Panc1 (cell line): ENCODE measurements at regions of chr3 and their contacts with region 1.

Region 1: GRCh38 chr3:1824359-1824758 is 274.3 kb upstream of the CNTN4 start:
- DNase-seq: no peak
- ATAC-seq: no peak
- H3K4me3 ChIP-seq: no peak overlapping the region
- H3K27ac ChIP-seq: no peak overlapping the region
- H3K4me1 ChIP-seq: no peaks in the 10 kb centered on the region
- H3K27me3 ChIP-seq: no peaks in the 10 kb centered on the region
- CTCF ChIP-seq: no peak

Region 2: GRCh38 chr3:882533-882932 is 941.8 kb before region 1 on chr3:
- CTCF ChIA-PET with region 1: interaction called, 10 read pairs
- POLR2A ChIA-PET with region 1: no interaction called
- in situ Hi-C with region 1: no loop called
- intact Hi-C with region 1: no loop called
- DNase-seq: no peak
- ATAC-seq: no peak
- H3K4me3 ChIP-seq: no peak overlapping the region
- H3K27ac ChIP-seq: no peak overlapping the region
- H3K4me1 ChIP-seq: no peaks in the 10 kb centered on the region
- H3K27me3 ChIP-seq: no peaks in the 10 kb centered on the region
- CTCF ChIP-seq: no peak

Region 3: GRCh38 chr3:1726741-1727140 is 97.6 kb before region 1 on chr3:
- CTCF ChIA-PET with region 1: no interaction called
- POLR2A ChIA-PET with region 1: no interaction called
- in situ Hi-C with region 1: no loop called
- intact Hi-C with region 1: no loop called
- DNase-seq: no peak
- ATAC-seq: no peak
- H3K4me3 ChIP-seq: no peak overlapping the region
- H3K27ac ChIP-seq: no peak overlapping the region
- H3K4me1 ChIP-seq: no peaks in the 10 kb centered on the region
- H3K27me3 ChIP-seq: no peaks in the 10 kb centered on the region
- CTCF ChIP-seq: no peak

Region 4: DNA sequence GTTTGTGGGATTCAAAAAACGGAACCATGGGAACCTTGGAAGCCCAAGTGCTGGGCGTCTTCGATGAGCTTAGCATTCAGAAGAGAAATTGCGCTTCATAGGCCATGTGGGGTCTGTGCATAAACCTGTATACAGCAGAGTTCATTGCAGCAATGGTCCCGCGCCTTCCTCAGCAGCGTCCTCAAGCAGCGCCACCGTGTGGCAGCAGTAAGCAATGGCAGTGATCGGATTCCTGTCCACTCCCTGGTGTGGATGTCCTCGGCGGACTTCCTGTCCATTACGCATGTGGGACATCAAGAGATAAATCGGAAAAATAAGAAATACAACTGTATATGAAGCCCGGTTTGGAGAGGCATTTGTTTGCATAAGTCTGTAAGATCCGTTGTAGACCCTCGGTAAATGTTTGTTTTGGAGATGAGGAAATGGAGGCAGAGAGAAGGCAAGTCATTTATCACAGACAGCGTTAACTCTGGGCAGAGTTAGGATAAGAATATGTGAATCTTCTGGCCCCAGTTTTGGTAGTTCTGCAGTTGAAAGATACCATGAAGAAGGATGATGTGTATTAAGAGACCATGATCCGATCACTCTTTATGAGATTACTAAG is 332.0 kb after region 1 on chr3:
- CTCF ChIA-PET with region 1: no interaction called
- POLR2A ChIA-PET with region 1: no interaction called
- in situ Hi-C with region 1: no loop called
- intact Hi-C with region 1: no loop called
- DNase-seq: peak; percentile 2
- ATAC-seq: no peak
- H3K4me3 ChIP-seq: no peak overlapping the region
- H3K27ac ChIP-seq: no peak overlapping the region
- H3K4me1 ChIP-seq: no peaks in the 10 kb centered on the region
- H3K27me3 ChIP-seq: no peaks in the 10 kb centered on the region
- CTCF ChIP-seq: peak; percentile 66